OCI-LY7 (cell line): ENCODE measurements at regions of chr17 and their contacts with region 1.

Region 1: GRCh38 chr17:34361478-34362061 is 1.5 kb downstream of the CCL1 start:
- DNase-seq: peak; percentile 95
- H3K4me3 ChIP-seq: no peak overlapping the region
- H3K27ac ChIP-seq: peak overlapping the region; percentile 98
- H3K4me1 ChIP-seq: peaks cover 62% of the 10 kb centered on the region
- CTCF ChIP-seq: peak; percentile 100

Region 2: GRCh38 chr17:34171245-34171818 is 190.2 kb before region 1 on chr17:
- CTCF ChIA-PET with region 1: interaction called, 7 read pairs
- POLR2A ChIA-PET with region 1: interaction called, 3 read pairs
- intact Hi-C with region 1: loop called (anchors 1 kb)
- DNase-seq: peak; percentile 63
- H3K4me3 ChIP-seq: no peak overlapping the region
- H3K27ac ChIP-seq: no peak overlapping the region
- H3K4me1 ChIP-seq: no peaks in the 10 kb centered on the region
- CTCF ChIP-seq: peak; percentile 91

Region 3: GRCh38 chr17:34220754-34221395 is 140.7 kb before region 1 on chr17:
- CTCF ChIA-PET with region 1: no interaction called
- POLR2A ChIA-PET with region 1: no interaction called
- intact Hi-C with region 1: loop called (anchors 10 kb)
- DNase-seq: no peak
- H3K4me3 ChIP-seq: no peak overlapping the region
- H3K27ac ChIP-seq: no peak overlapping the region
- H3K4me1 ChIP-seq: no peaks in the 10 kb centered on the region
- CTCF ChIP-seq: no peak

Region 4: GRCh38 chr17:34318474-34318873 is 43.1 kb before region 1 on chr17:
- CTCF ChIA-PET with region 1: no interaction called
- POLR2A ChIA-PET with region 1: no interaction called
- intact Hi-C with region 1: loop called (anchors 2 kb)
- DNase-seq: peak; percentile 49
- H3K4me3 ChIP-seq: no peak overlapping the region
- H3K27ac ChIP-seq: no peak overlapping the region
- H3K4me1 ChIP-seq: no peaks in the 10 kb centered on the region
- CTCF ChIP-seq: peak; percentile 74

Region 5: GRCh38 chr17:34409352-34409751 is 47.8 kb after region 1 on chr17:
- CTCF ChIA-PET with region 1: no interaction called
- POLR2A ChIA-PET with region 1: no interaction called
- intact Hi-C with region 1: no loop called
- DNase-seq: no peak
- H3K4me3 ChIP-seq: no peak overlapping the region
- H3K27ac ChIP-seq: no peak overlapping the region
- H3K4me1 ChIP-seq: no peaks in the 10 kb centered on the region
- CTCF ChIP-seq: no peak

Region 6: GRCh38 chr17:34420254-34420766 is 58.7 kb after region 1 on chr17:
- CTCF ChIA-PET with region 1: no interaction called
- POLR2A ChIA-PET with region 1: no interaction called
- intact Hi-C with region 1: loop called (anchors 2 kb)
- DNase-seq: peak; percentile 76
- H3K4me3 ChIP-seq: no peak overlapping the region
- H3K27ac ChIP-seq: no peak overlapping the region
- H3K4me1 ChIP-seq: no peaks in the 10 kb centered on the region
- CTCF ChIP-seq: peak; percentile 99

Region 7: GRCh38 chr17:34598161-34598776 is 236.7 kb after region 1 on chr17:
- CTCF ChIA-PET with region 1: no interaction called
- POLR2A ChIA-PET with region 1: no interaction called
- intact Hi-C with region 1: no loop called
- DNase-seq: no peak
- H3K4me3 ChIP-seq: no peak overlapping the region
- H3K27ac ChIP-seq: no peak overlapping the region
- H3K4me1 ChIP-seq: no peaks in the 10 kb centered on the region
- CTCF ChIP-seq: no peak

Region 8: GRCh38 chr17:34840750-34841149 is 479.2 kb after region 1 on chr17:
- CTCF ChIA-PET with region 1: no interaction called
- POLR2A ChIA-PET with region 1: no interaction called
- intact Hi-C with region 1: loop called (anchors 10 kb)
- DNase-seq: peak; percentile 89
- H3K4me3 ChIP-seq: peak overlapping the region; percentile 39
- H3K27ac ChIP-seq: peak overlapping the region; percentile 84
- H3K4me1 ChIP-seq: peaks cover 66% of the 10 kb centered on the region
- CTCF ChIP-seq: no peak